Vagina (tissue), 2 donors: ENCODE measurements at regions of chr20 and their contacts with region 1.

Region 1: GRCh38 chr20:32521780-32522525 is 63.2 kb downstream of the NOL4L start:
- DNase-seq: no peak
- H3K4me3 ChIP-seq: no peak overlapping the region
- H3K27ac ChIP-seq: no peak overlapping the region
- H3K4me1 ChIP-seq: peaks cover 54% of the 10 kb centered on the region
- H3K27me3 ChIP-seq: no peaks in the 10 kb centered on the region
- CTCF ChIP-seq: peak; percentile 70 to 72 (median 70)
- POLR2A ChIP-seq: no peak

Region 2: DNA sequence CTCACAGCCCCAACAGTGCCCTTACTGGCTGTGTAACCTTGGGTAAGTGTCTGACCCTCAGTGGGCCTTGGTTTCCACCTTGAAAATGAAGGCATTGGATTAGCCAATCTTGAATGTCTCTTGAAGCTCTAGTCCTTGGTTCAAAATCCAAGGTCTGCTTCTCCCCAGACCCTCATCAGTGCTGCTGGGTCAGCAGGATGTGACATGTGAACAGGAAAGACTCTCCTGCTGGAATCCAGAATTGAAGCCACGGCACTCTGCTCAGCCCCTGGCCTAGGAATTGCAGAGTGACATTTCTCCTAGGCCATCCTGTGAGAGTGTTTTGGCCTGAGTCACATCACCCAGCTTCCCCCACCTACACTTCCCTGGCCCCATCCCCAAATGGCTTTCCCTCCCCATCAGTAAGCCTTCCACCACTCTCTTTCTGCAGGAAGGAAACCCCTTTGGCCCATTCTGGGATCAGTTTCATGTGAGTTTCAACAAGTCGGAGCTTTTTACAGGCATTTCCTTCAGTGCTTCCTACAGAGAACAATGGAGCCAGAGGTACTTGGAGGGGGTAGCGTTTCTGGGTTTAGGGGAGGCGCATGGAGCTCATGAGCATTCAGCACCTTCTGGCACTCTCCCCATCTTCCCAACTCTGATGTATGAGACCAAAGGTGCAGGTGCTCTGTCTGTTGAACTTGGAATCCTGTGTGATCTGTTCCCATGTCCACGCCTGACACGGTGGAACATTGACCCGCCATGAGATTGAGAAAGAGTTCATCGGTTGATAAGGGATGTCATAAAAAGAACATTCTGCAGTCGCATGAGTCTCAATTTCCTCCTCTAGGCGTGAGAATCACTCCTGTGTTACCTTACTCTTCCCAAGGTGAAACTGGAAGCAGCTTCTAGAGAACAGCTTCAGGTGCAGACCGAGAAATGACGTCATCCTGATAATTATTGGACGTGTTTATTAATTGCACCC is 305.5 kb before region 1 on chr20:
- intact Hi-C with region 1: no loop called
- DNase-seq: no peak
- H3K4me3 ChIP-seq: no peak overlapping the region
- H3K27ac ChIP-seq: no peak overlapping the region
- H3K4me1 ChIP-seq: no peaks in the 10 kb centered on the region
- H3K27me3 ChIP-seq: no peaks in the 10 kb centered on the region
- CTCF ChIP-seq: no peak
- POLR2A ChIP-seq: no peak

Region 3: DNA sequence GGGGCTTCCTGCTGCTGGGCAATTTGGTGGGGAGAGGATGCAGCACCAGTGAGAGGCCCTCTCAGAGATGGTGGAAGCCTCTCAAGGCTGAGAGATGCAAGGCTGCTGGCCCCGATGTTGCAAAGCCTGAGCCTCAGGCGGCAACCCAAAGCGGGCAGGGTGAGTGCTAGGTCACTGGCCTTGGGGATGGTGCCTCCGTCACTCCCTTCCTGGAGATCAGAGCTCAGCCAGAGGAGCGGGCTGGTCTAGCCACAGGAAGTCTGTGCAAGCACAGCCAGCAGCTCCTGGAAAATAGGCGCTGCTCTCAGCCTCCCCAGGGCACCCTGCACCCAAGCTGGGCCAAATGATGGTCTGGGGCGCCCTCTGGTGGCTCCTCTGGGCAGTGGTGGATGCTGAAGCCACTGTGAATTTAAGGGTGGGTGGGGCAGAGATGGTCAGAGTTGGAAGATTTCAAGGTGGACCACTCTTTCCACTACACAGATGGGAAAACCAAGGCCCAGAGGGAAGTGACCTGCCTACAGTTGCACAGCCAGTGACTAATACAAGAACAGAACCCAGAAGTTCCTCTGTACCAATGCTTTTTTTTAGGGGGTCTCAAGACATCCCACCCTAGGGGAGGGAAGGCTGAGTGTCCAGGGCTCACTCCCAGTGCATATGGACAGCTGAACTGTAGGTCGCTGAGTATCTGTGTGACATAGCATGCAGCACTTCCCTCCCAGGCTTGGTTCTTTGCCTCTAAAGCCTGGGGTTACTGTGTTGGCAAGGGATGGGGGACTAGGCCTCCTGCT is 131.0 kb after region 1 on chr20:
- intact Hi-C with region 1: loop called (anchors 2 kb)
- DNase-seq: no peak
- H3K4me3 ChIP-seq: no peak overlapping the region
- H3K27ac ChIP-seq: no peak overlapping the region
- H3K4me1 ChIP-seq: no peaks in the 10 kb centered on the region
- H3K27me3 ChIP-seq: no peaks in the 10 kb centered on the region
- CTCF ChIP-seq: peak; percentile 94 to 97 (median 96)
- POLR2A ChIP-seq: no peak

Region 4: GRCh38 chr20:32779500-32780211 is 257.7 kb after region 1 on chr20:
- intact Hi-C with region 1: loop called (anchors 10 kb)
- DNase-seq: no peak
- H3K4me3 ChIP-seq: no peak overlapping the region
- H3K27ac ChIP-seq: no peak overlapping the region
- H3K4me1 ChIP-seq: no peaks in the 10 kb centered on the region
- H3K27me3 ChIP-seq: no peaks in the 10 kb centered on the region
- CTCF ChIP-seq: no peak
- POLR2A ChIP-seq: no peak

Region 5: DNA sequence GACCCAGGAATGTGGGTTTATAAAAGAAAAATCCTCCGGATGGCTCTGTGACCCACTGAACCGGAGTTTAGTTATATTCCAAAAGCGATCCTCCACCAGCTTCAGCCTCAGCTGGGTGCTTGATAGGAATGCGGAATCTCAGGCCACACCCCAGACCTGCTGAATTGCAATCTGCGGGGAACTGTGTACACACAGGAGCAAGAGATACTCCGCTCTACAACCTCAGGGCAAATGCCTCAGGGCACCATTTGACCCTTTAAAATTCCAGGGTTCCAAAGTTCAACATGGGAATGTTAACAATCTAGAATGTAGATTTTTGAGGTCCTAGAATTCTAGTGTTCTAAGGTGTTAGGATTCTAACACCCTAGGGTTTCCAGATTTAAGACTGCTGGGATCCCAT is 656.8 kb after region 1 on chr20:
- intact Hi-C with region 1: no loop called
- DNase-seq: no peak
- H3K4me3 ChIP-seq: no peak overlapping the region
- H3K27ac ChIP-seq: no peak overlapping the region
- H3K4me1 ChIP-seq: no peaks in the 10 kb centered on the region
- H3K27me3 ChIP-seq: no peaks in the 10 kb centered on the region
- CTCF ChIP-seq: no peak
- POLR2A ChIP-seq: no peak